ENCODE measurements at regions of chr18 and their contacts with region 1.

Region 1: GRCh38 chr18:31819106-31819924 is 58.6 kb upstream of the SLC25A52 start:
- DNase-seq: peak; percentile 15 to 55
- H3K4me3 ChIP-seq: peak overlapping the region in 1 of 4 experiments; percentile 22; a peak in 1 of 8 replicates
- H3K27ac ChIP-seq: no peak overlapping the region
- H3K4me1 ChIP-seq: peaks cover 0 to 15% (median 5%) of the 10 kb centered on the region in 4 experiments; a peak in 4 of 7 replicates
- H3K27me3 ChIP-seq: no peaks in the 10 kb centered on the region
- CTCF ChIP-seq: peak in 2 of 3 experiments; percentile 55 to 76; a peak in 2 of 4 replicates
- EP300 ChIP-seq: no peak
- POLR2A ChIP-seq: peak in 1 of 2 experiments; percentile 16; a peak in 1 of 3 replicates
- RAD21 ChIP-seq: peak; percentile 78 to 82

Region 2: DNA sequence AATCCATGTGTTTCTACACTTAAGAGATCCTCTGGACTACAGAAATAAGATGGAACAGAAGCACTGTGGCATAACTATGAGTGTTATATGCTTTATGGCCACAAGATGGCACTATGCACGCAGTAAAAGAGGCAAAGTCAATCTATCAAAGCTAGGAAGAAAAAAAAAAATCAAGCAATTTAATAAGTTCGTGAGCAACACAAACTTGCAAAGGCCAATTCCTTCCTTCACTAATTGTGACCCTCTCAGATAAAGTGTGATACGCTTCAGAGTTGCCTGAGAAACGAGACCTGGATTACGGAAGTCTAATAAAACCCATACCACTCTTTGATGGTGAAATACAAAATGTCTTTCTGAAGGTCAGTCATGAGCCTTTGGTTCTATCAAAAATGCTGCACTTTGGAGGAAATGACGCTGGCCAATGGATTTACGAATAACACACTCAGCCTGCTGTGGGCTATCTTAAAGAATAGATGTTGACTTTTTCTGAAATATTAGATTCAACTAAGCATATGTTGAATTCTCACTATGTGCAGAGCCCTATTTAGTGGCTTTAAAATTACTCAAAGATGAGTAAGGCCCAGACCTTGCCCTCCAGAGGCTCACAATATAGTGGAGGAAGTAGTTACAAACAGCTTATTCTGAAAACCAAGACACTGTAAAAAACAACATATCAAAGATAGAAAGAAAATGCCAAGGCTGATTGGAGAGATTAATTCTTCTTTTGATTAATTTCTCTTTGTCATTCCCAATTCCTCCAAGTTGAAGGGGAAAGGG is 263.2 kb before region 1 on chr18:
- CTCF ChIA-PET with region 1: interaction called, 11 read pairs
- POLR2A ChIA-PET with region 1: no interaction called
- DNase-seq: no peak
- H3K4me3 ChIP-seq: no peak overlapping the region
- H3K27ac ChIP-seq: no peak overlapping the region
- H3K4me1 ChIP-seq: peaks cover 1 to 9% (median 2%) of the 10 kb centered on the region in 4 experiments; a peak in 3 of 7 replicates
- H3K27me3 ChIP-seq: no peaks in the 10 kb centered on the region
- CTCF ChIP-seq: peak in 2 of 3 experiments; percentile 68; a peak in 3 of 4 replicates
- EP300 ChIP-seq: no peak
- POLR2A ChIP-seq: no peak
- RAD21 ChIP-seq: peak; percentile 92 to 94

Region 3: DNA sequence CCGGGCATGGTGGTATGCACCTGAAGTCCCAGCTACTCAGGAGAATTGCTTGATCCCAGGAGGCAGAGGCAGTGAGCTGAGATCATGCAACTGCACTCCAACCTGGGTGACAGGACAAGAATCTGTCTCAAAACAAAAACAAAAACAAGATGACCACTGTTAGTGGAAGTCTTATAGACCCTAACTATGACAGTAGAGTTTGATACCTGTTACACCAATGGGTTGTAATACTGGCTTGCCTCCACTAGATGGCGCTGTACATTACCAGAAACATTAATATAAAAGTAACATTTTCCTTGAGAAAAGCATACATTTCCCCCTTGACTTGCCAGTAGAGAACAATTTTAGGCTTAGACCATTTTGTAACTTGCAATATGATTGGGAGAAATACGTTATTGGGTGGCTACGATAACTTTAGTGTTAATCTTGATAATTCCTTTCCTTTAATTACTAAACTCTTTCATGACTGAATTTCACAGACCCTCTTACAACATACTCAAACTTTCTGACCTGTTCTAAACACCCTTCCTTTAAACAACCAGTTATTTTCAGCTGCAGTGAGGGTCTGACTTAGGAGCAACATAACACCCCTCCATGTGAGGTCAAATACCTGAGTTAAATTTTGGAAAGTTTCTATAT is 78.1 kb before region 1 on chr18:
- CTCF ChIA-PET with region 1: interaction called, 10 read pairs
- POLR2A ChIA-PET with region 1: no interaction called
- DNase-seq: peak in 1 of 2 experiments; percentile 72
- H3K4me3 ChIP-seq: no peak overlapping the region
- H3K27ac ChIP-seq: no peak overlapping the region
- H3K4me1 ChIP-seq: no peaks in the 10 kb centered on the region; a peak in 3 of 7 replicates
- H3K27me3 ChIP-seq: no peaks in the 10 kb centered on the region
- CTCF ChIP-seq: peak in 2 of 3 experiments; percentile 35 to 70; a peak in 2 of 4 replicates
- EP300 ChIP-seq: no peak
- POLR2A ChIP-seq: no peak
- RAD21 ChIP-seq: peak; percentile 61 to 69

Region 4: DNA sequence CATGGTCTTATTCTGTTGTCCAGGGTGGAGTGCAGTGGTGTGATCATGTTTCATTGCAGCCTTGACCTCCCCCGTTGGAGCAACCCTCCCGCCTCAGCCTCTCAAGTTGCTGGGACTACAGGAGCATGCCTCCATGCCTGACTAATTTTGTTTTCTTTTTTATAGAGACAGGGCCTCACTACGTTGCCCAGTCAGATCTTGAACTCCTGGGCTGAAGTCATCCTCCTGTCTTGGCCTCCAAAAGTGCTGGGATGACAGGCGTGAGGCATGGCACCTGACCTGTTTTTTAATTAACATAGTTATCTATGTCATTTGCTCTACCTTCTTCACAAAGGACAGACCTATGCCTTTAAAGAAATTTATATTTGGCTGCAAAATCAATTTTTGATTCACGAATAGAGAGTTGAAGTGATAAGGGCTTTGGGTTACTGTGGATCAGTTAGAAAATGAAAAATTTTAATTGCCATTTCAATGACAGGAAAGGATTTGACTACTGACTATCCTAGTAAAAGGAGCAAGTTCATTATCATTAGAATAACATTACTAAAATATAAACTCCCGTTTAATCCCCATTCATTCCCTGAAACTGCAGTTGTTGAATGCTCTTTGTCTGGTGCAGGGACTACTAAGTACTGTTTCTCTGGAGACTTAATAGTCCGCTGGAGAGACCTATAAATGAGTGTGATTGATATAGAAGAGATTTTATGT is 276.0 kb after region 1 on chr18:
- CTCF ChIA-PET with region 1: no interaction called
- POLR2A ChIA-PET with region 1: no interaction called
- DNase-seq: no peak
- H3K4me3 ChIP-seq: no peak overlapping the region
- H3K27ac ChIP-seq: no peak overlapping the region
- H3K4me1 ChIP-seq: peaks cover 0 to 3% (median 3%) of the 10 kb centered on the region in 4 experiments; a peak in 3 of 7 replicates
- H3K27me3 ChIP-seq: no peaks in the 10 kb centered on the region
- CTCF ChIP-seq: no peak
- EP300 ChIP-seq: no peak
- POLR2A ChIP-seq: no peak
- RAD21 ChIP-seq: no peak

Measured in H1 (cell line).